ENCODE measurements at regions of chr3 and their contacts with region 1.

Region 1: GRCh38 chr3:132722164-132723024 is at the start of gene NPHP3:
- DNase-seq: peak; percentile 98 to 100
- ATAC-seq: peak; percentile 96
- H3K4me3 ChIP-seq: peak within 1 kb of the TSS; percentile 86 to 96
- H3K27ac ChIP-seq: peak within 1 kb of the TSS; percentile 84 to 91
- H3K4me1 ChIP-seq: peaks cover 3 to 13% of the 10 kb centered on the region in 2 donors
- H3K27me3 ChIP-seq: no peaks in the 10 kb centered on the region
- total RNA-seq, gene NPHP3: 38.1 to 56.9 TPM

Region 2: GRCh38 chr3:133384331-133385027 is 662.1 kb after region 1 on chr3:
- intact Hi-C with region 1: loop called in 1 of 2 experiments (anchors 10 kb)
- DNase-seq: peak in 1 of 2 donors; percentile 50
- ATAC-seq: peak; percentile 72
- H3K4me3 ChIP-seq: no peak overlapping the region
- H3K27ac ChIP-seq: no peak overlapping the region
- H3K4me1 ChIP-seq: no peaks in the 10 kb centered on the region
- H3K27me3 ChIP-seq: no peaks in the 10 kb centered on the region

Region 3: DNA sequence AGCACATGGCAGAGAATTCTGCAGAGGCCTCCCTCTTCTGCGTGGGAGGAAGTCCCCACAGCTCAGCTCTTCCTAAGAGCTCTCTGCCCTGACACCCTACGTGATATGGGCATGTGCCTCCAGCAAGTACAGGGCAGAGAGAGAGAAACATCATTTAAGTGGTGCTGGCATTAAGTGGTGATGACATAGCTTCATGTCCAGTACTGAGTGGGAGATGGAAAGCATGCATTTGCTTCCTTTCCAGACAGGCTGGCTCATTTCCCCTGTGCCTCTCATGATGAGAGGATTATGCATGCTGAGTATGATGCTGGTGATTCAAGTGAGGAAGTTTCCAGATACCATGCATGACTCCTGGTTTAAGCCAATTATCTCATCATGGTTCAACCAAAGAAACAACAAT is 704.3 kb after region 1 on chr3:
- intact Hi-C with region 1: loop called in 1 of 2 experiments (anchors 5 kb)
- DNase-seq: no peak
- ATAC-seq: no peak
- H3K4me3 ChIP-seq: no peak overlapping the region
- H3K27ac ChIP-seq: no peak overlapping the region
- H3K4me1 ChIP-seq: no peaks in the 10 kb centered on the region
- H3K27me3 ChIP-seq: no peaks in the 10 kb centered on the region

Region 4: DNA sequence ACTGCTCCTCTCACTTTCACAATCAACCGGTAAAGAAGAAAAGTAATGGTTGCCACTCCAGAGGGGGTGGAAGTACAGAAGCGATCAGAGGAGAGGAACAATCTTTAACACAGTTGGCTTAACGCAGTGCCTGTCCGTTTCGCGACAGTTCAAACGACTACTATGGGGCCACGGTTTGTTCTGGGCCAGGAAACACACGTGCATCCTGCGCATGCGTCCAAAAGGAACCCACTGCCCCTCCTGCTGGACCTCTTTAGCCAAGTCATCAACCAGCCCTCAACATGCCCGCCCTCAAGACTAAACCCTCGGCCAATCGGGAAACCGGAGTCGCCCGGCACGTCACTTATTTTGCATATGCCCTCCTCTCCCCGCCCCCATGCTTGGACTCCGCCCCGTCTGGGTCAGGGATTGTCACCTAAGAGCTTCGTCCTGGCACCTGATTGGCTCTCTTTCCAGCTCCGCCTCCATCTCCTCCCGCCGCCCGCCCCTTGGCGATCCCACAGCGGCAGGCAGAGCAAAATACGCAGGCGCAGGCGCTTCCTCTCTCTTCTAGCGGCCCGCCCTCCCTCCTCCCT is 850.7 kb after region 1 on chr3:
- intact Hi-C with region 1: loop called (anchors 2 to 10 kb)
- DNase-seq: peak; percentile 100
- ATAC-seq: peak; percentile 97
- H3K4me3 ChIP-seq: peak overlapping the region in 1 of 2 donors; percentile 27
- H3K27ac ChIP-seq: peak overlapping the region in 1 of 2 donors; percentile 97
- H3K4me1 ChIP-seq: peaks cover 5% of the 10 kb centered on the region in 2 donors
- H3K27me3 ChIP-seq: no peaks in the 10 kb centered on the region

Measured in aorta (tissue), 5 donors.